Sigmoid colon (tissue), 7 donors: ENCODE measurements at regions of chr12 and their contacts with region 1.

Region 1: DNA sequence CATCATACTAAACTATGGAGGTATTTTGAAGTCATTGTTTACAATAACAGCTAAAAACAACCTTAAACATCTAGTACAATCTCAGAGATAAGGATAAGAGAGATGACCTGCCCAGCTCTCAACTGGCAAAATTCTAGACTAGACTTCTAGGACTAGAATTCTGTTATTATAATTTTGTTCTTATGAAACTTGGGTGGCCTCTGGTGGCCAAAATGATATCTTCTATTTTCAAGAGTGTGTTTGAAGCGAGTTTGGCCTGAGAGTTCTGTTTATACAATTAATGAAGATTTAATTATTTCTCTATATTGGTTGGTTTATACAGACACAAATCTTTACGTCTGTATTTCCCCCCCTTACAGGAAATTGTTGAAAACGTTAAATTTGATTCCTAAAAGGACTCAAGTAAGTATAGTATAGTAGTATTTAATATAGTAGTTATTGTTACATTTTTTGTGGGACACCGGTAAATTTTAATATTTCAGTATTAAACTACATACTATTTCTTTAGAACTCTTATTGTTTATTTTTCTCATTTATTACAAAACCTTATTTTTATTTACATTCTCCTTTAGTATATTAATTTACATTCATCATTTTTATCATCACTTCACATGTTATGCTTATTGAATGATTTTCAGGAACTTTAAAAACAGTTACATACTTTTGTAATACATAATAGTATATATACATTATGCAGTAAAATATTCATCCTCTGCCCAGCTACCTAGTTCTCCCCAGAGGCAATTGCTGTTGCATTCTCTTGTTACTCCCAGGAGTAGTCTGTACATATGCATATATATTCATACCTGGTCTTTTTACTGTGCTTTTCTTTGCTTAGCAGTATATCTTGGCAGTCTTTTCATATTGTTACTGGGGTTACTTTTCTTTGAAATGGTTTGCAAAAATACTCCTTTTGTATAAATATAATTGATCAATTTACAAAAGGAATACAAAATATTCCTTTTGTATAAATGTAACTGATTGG is 6.6 kb downstream of the PPHLN1 start:
- DNase-seq: no peak
- H3K4me3 ChIP-seq: no peak overlapping the region
- H3K27ac ChIP-seq: no peak overlapping the region
- H3K4me1 ChIP-seq: peaks cover 0 to 6% (median 4%) of the 10 kb centered on the region in 4 donors
- H3K27me3 ChIP-seq: no peaks in the 10 kb centered on the region
- CTCF ChIP-seq: peak in 3 of 4 experiments; percentile 34 to 59 (median 50)
- EP300 ChIP-seq: no peak
- POLR2A ChIP-seq: no peak

Region 2: GRCh38 chr12:42144408-42145196 is 188.0 kb before region 1 on chr12 and contains the start of gene GXYLT1:
- intact Hi-C with region 1: loop called (anchors 1 kb)
- DNase-seq: peak; percentile 95
- H3K4me3 ChIP-seq: peak within 1 kb of the TSS; percentile 49 to 78 (median 72)
- H3K27ac ChIP-seq: peak within 1 kb of the TSS; percentile 87 to 90 (median 90)
- H3K4me1 ChIP-seq: peaks cover 0 to 16% (median 10%) of the 10 kb centered on the region in 4 donors
- H3K27me3 ChIP-seq: no peaks in the 10 kb centered on the region
- CTCF ChIP-seq: no peak
- EP300 ChIP-seq: no peak
- POLR2A ChIP-seq: no peak
- total RNA-seq, gene GXYLT1: 8.8 to 14.3 (median 11.5) TPM

Region 3: DNA sequence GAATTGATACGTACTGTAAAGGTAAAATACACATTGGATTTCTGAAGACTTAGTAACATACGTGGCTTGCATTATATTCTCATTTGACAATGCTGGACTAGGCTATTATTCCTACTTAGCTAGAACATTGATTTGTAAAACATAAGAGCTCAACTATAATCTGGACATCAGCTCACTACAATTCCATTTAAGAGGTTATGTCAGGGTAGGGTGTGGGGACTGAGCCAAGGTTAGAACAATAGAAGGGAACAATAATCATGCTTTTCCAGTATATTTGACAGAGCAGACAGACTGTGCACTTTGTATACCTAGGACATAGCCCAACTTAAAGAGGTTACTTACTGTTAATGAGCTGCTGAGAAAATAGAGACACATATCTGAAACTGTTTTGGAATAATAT is 17.5 kb before region 1 on chr12:
- intact Hi-C with region 1: no loop called
- DNase-seq: no peak
- H3K4me3 ChIP-seq: no peak overlapping the region
- H3K27ac ChIP-seq: no peak overlapping the region
- H3K4me1 ChIP-seq: no peaks in the 10 kb centered on the region
- H3K27me3 ChIP-seq: no peaks in the 10 kb centered on the region
- CTCF ChIP-seq: no peak
- EP300 ChIP-seq: no peak
- POLR2A ChIP-seq: no peak